MCF 10A (cell line): ENCODE measurements at regions of chr1 and their contacts with region 1.

Region 1: GRCh38 chr1:206865013-206865671 is at the start of gene IL20:
- DNase-seq: peak; percentile 100
- H3K4me3 Mint-ChIP-seq: no peak within 1 kb of the TSS
- H3K27ac Mint-ChIP-seq: no peak within 1 kb of the TSS
- H3K4me1 Mint-ChIP-seq: peaks cover 32% of the 10 kb centered on the region
- H3K27me3 Mint-ChIP-seq: peaks cover 17% of the 10 kb centered on the region
- CTCF ChIP-seq: peak; percentile 100
- total RNA-seq, gene IL20: not detected in 2 replicates

Region 2: DNA sequence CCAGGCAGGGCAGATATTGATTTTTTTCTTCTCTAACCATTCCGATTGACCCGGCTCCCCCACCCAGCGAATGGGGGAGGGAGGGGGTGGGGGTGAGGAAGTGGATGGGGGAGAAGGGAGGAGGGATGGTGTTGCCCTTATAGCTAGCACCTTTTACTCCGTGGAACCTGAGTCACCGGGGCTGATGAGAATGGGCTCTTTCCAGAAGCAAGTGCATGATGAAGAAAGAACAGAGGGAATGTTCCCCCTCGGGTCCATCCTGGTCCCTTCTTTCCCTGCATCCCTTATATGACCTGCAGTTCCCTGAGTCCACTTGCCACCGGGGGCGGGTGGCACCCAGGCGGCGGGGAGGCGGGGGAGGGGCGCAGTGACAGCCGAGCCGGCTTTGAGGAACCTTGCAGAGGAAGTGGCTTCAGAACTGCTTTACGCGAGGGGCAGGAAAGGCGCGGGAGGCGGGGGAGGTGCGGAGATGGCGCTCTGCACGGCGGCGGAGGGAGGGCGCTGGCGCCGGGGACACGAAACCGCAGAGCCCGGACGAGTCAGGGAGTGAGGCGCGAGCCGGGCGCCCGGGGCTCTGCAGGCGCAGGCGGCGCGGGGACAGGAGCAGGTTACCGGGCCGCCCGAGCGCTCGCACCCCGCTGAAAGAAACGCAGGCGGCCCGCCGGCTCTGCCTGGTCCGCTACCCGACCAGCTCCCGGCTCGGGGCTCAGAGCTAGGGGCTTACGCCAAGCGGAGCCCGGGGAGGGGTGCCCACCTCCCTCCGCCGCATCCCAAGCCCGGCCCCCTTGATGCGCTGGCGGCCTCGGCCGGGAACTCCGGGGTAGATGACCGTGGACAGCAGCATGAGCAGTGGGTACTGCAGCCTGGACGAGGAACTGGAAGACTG is 308.1 kb before region 1 on chr1:
- CTCF ChIA-PET with region 1: no interaction called
- POLR2A ChIA-PET with region 1: no interaction called
- intact Hi-C with region 1: no loop called
- DNase-seq: peak; percentile 66
- H3K4me3 Mint-ChIP-seq: peak overlapping the region; percentile 68
- H3K27ac Mint-ChIP-seq: no peak overlapping the region
- H3K4me1 Mint-ChIP-seq: no peaks in the 10 kb centered on the region
- H3K27me3 Mint-ChIP-seq: no peaks in the 10 kb centered on the region
- CTCF ChIP-seq: no peak

Region 3: GRCh38 chr1:206826405-206826804 is 38.7 kb before region 1 on chr1:
- CTCF ChIA-PET with region 1: interaction called, 23 read pairs
- POLR2A ChIA-PET with region 1: no interaction called
- intact Hi-C with region 1: no loop called
- DNase-seq: peak; percentile 68
- H3K4me3 Mint-ChIP-seq: no peak overlapping the region
- H3K27ac Mint-ChIP-seq: peak overlapping the region; percentile 73
- H3K4me1 Mint-ChIP-seq: peaks cover 14% of the 10 kb centered on the region
- H3K27me3 Mint-ChIP-seq: no peaks in the 10 kb centered on the region
- CTCF ChIP-seq: no peak

Region 4: DNA sequence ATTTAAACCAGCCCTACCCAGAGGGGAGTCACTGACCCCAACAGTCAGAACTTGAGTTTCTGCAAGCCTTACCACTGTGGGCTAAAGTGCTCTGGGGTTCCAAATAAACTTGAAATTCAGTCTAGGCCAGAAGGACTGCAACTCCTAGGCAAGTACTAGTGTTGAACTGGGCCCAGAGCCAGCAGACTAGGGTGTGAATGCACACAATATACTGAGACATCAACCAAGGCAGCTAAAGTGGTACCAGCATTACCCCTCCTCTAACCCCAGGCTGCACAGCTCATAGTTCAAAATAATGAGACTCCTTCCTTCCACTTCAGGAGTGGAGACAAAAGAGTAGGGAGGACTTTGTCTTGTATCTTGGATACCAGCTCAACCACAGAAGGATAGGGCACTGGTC is 18.7 kb before region 1 on chr1:
- CTCF ChIA-PET with region 1: interaction called, 22 read pairs
- POLR2A ChIA-PET with region 1: interaction called, 3 read pairs
- intact Hi-C with region 1: no loop called
- DNase-seq: peak; percentile 34
- H3K4me3 Mint-ChIP-seq: no peak overlapping the region
- H3K27ac Mint-ChIP-seq: no peak overlapping the region
- H3K4me1 Mint-ChIP-seq: peaks cover 21% of the 10 kb centered on the region
- H3K27me3 Mint-ChIP-seq: peaks cover 23% of the 10 kb centered on the region
- CTCF ChIP-seq: no peak

Region 5: DNA sequence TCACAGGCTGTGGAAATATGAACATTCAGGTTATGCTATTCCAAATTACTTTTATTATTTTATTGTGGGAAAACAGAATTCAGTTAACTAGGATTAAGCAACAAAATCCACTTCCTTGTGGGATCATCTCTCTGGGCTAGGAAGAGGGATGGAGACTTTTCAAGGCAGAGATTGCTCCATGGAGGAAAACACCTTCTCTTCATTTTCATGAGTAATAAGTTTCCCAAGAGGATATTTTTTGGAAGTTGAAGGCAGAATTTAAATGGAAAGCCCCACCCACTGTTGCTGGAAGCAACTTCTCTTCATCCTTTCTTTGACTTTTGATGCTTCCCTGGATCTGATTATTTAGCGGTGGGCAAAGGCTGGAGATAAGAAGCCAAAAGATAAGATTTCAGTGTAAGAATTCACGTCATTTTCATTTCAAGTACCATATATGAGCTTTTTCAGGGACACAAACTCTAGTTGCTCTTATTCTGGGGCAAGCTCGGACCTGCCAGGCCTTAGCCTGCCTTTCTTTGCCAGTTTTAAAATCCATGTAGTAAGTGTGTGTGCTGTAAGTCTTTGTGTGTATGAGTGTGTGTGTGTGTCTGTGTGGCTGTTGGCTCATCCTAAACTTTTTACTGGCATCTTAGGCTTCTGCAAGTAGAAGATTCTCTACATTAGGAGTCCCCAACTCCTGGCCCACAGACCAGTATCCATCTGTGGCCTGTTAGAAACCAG is 20.4 kb after region 1 on chr1:
- CTCF ChIA-PET with region 1: interaction called, 30 read pairs
- POLR2A ChIA-PET with region 1: interaction called, 10 read pairs
- intact Hi-C with region 1: loop called (anchors 1 kb)
- DNase-seq: peak; percentile 90
- H3K4me3 Mint-ChIP-seq: peak overlapping the region; percentile 5
- H3K27ac Mint-ChIP-seq: peak overlapping the region; percentile 58
- H3K4me1 Mint-ChIP-seq: peaks cover 66% of the 10 kb centered on the region
- H3K27me3 Mint-ChIP-seq: no peaks in the 10 kb centered on the region
- CTCF ChIP-seq: no peak

Region 6: DNA sequence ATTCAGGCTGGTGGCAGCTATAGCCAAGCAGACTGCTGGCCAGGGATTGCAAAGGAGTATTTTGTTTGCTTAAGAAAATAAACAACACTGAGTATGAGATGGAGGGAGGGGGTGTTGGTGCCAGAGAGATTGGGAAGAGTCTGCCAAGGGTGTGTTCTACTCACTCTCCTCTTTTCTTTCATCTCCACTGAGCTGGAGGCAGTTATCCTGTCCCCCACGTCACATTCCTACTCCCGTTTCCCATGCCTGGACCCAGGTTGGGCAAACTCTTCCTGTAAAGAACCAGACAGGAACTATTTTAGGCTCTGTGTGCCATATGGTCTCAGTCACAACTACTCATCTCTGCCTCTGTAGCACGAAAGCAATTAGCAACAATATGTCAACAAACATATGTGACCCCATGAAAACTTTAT is 30.7 kb after region 1 on chr1:
- CTCF ChIA-PET with region 1: interaction called, 28 read pairs
- POLR2A ChIA-PET with region 1: interaction called, 30 read pairs
- intact Hi-C with region 1: no loop called
- DNase-seq: peak; percentile 99
- H3K4me3 Mint-ChIP-seq: peak overlapping the region; percentile 2
- H3K27ac Mint-ChIP-seq: peak overlapping the region; percentile 89
- H3K4me1 Mint-ChIP-seq: peaks cover 71% of the 10 kb centered on the region
- H3K27me3 Mint-ChIP-seq: no peaks in the 10 kb centered on the region
- CTCF ChIP-seq: no peak